ENCODE measurements at regions of chr19 and their contacts with region 1.

Region 1: GRCh38 chr19:8444645-8445487 is at the start of gene HNRNPM:
- DNase-seq: peak; percentile 98 to 99 (median 99)
- ATAC-seq: peak; percentile 96
- H3K4me3 ChIP-seq: peak within 1 kb of the TSS; percentile 96
- H3K27ac ChIP-seq: peak within 1 kb of the TSS; percentile 98
- H3K4me1 ChIP-seq: peaks cover 20 to 38% of the 10 kb centered on the region in 2 experiments
- H3K27me3 ChIP-seq: no peaks in the 10 kb centered on the region
- CTCF ChIP-seq: peak in 1 of 3 experiments; percentile 9; a peak in 1 of 6 replicates
- EP300 ChIP-seq: no peak; the same call in 1 of the 2 replicates
- POLR2A ChIP-seq: peak; percentile 97
- RAD21 ChIP-seq: peak in 1 of 2 experiments; percentile 24; a peak in 1 of 4 replicates
- polyA plus RNA-seq, gene HNRNPM: 11.1 to 13.1 TPM

Region 2: GRCh38 chr19:8412783-8413628 is 31.9 kb before region 1 on chr19 and contains the start of gene MARCHF2:
- CTCF ChIA-PET with region 1: no interaction called
- POLR2A ChIA-PET with region 1: interaction called, 14 read pairs
- in situ Hi-C with region 1: no loop called
- intact Hi-C with region 1: loop called (anchors 2 kb)
- DNase-seq: peak; percentile 97 to 99 (median 98)
- ATAC-seq: peak; percentile 99
- H3K4me3 ChIP-seq: peak within 1 kb of the TSS; percentile 53
- H3K27ac ChIP-seq: no peak within 1 kb of the TSS
- H3K4me1 ChIP-seq: peaks cover 22 to 39% of the 10 kb centered on the region in 2 experiments; a peak in 4 of 5 replicates
- H3K27me3 ChIP-seq: no peaks in the 10 kb centered on the region
- CTCF ChIP-seq: peak; percentile 58 to 80 (median 76)
- EP300 ChIP-seq: no peak
- POLR2A ChIP-seq: no peak
- RAD21 ChIP-seq: peak; percentile 52 to 58
- polyA plus RNA-seq, gene MARCHF2: 0.39 to 0.41 TPM

Region 3: GRCh38 chr19:8423817-8424223 is 21.0 kb before region 1 on chr19:
- CTCF ChIA-PET with region 1: no interaction called
- POLR2A ChIA-PET with region 1: interaction called, 18 read pairs
- in situ Hi-C with region 1: no loop called
- intact Hi-C with region 1: loop called (anchors 2 kb)
- DNase-seq: peak; percentile 77 to 92 (median 79)
- ATAC-seq: peak; percentile 98
- H3K4me3 ChIP-seq: no peak overlapping the region
- H3K27ac ChIP-seq: peak overlapping the region; percentile 50; the same call in 2 of the 3 replicates
- H3K4me1 ChIP-seq: peaks cover 11 to 28% of the 10 kb centered on the region in 2 experiments
- H3K27me3 ChIP-seq: no peaks in the 10 kb centered on the region
- CTCF ChIP-seq: no peak
- EP300 ChIP-seq: no peak
- POLR2A ChIP-seq: no peak
- RAD21 ChIP-seq: no peak

Region 4: DNA sequence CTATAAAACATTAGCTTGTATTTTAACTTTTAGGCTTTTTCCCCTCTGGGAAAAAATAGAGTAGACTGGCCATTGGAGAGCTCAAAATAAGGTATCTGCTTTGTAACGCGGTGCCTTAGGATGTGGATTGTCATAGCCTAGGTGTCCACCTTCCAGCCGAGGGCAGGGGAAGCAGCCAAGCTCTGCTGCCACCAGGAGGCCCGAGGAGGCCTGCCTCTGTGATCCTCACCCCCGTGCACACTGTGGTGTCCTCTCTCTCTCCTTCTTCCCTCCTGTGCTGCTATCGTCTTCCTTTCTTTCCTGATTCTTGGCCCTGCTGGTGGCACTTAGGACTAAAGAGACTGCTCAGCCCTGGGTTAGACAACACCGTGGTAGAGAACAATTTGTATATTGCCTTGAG is 11.2 kb after region 1 on chr19:
- CTCF ChIA-PET with region 1: no interaction called
- POLR2A ChIA-PET with region 1: interaction called, 31 read pairs
- in situ Hi-C with region 1: no loop called
- intact Hi-C with region 1: no loop called
- DNase-seq: peak in 1 of 4 experiments; percentile 24
- ATAC-seq: peak; percentile 77
- H3K4me3 ChIP-seq: no peak overlapping the region
- H3K27ac ChIP-seq: no peak overlapping the region
- H3K4me1 ChIP-seq: peaks cover 4 to 12% of the 10 kb centered on the region in 2 experiments; a peak in 3 of 5 replicates
- H3K27me3 ChIP-seq: no peaks in the 10 kb centered on the region
- CTCF ChIP-seq: peak; percentile 23 to 52 (median 36); a peak in 4 of 6 replicates
- EP300 ChIP-seq: no peak
- POLR2A ChIP-seq: no peak
- RAD21 ChIP-seq: peak in 1 of 2 experiments; percentile 35; a peak in 2 of 4 replicates

Region 5: GRCh38 chr19:8462571-8462970 is 17.7 kb after region 1 on chr19:
- CTCF ChIA-PET with region 1: no interaction called
- POLR2A ChIA-PET with region 1: interaction called, 31 read pairs
- in situ Hi-C with region 1: no loop called
- intact Hi-C with region 1: no loop called
- DNase-seq: no peak
- ATAC-seq: no peak
- H3K4me3 ChIP-seq: no peak overlapping the region
- H3K27ac ChIP-seq: no peak overlapping the region
- H3K4me1 ChIP-seq: no peaks in the 10 kb centered on the region
- H3K27me3 ChIP-seq: no peaks in the 10 kb centered on the region
- CTCF ChIP-seq: no peak
- EP300 ChIP-seq: no peak
- POLR2A ChIP-seq: no peak
- RAD21 ChIP-seq: no peak

Measured in K562 (cell line).